AG04450 (cell line): ENCODE measurements at regions of chr2 and their contacts with region 1.

Region 1: DNA sequence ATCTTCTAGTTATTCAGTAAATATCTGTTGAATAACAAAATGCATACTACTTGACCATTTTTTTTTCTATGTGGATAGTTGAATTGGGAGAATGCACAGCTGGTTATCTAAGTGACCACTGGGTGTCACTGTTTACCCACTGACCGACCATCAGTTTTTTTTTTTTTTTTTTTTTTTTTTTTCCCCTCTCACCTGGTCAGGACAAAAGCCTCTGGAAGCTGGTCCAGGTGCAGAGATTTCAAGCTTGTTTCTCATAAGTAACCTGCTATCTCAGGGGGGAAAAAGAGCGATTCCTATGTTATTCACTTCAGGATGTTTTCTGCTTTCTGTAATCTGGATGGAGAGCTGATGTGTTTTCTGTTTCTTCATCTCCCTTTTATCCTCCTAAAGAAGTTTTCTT is 256.0 kb downstream of the DCDC2C start:
- DNase-seq: no peak
- H3K4me3 ChIP-seq: no peak overlapping the region
- H3K27ac ChIP-seq: no peak overlapping the region
- H3K27me3 ChIP-seq: no peaks in the 10 kb centered on the region
- CTCF ChIP-seq: peak; percentile 73

Region 2: GRCh38 chr2:5325523-5325922 is 1366.2 kb after region 1 on chr2:
- CTCF ChIA-PET with region 1: interaction called, 10 read pairs
- POLR2A ChIA-PET with region 1: no interaction called
- DNase-seq: no peak
- H3K4me3 ChIP-seq: no peak overlapping the region
- H3K27ac ChIP-seq: no peak overlapping the region
- H3K27me3 ChIP-seq: no peaks in the 10 kb centered on the region
- CTCF ChIP-seq: no peak